ENCODE measurements at regions of chr11 and their contacts with region 1.

Region 1: GRCh38 chr11:64015935-64016845 is 19.5 kb upstream of the FLRT1 start:
- DNase-seq: no peak
- H3K4me3 ChIP-seq: no peak overlapping the region
- H3K27ac ChIP-seq: no peak overlapping the region
- H3K4me1 ChIP-seq: peaks cover 7% of the 10 kb centered on the region
- H3K27me3 ChIP-seq: no peaks in the 10 kb centered on the region
- CTCF ChIP-seq: no peak
- POLR2A ChIP-seq: no peak

Region 2: DNA sequence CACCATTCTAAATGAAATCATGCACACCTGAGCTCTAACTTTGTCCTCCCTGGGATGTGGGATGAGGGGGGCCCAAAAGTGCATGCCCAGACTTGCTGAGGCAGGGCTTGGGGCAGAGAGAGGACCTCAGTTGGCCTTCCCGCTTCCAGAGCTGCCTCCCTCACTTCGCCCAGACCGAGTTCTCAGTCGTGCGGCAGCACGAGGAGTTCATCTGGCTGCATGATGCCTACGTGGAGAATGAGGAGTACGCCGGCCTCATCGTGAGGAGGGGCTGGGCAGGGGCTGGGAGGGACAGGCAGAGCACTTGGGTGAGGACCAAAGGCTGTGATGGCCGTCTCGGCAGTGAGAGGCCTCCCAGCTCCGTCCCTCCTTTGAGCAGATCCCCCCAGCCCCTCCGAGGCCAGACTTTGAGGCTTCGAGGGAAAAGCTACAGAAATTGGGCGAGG is 1833.6 kb after region 1 on chr11:
- intact Hi-C with region 1: loop called (anchors 10 kb)
- DNase-seq: no peak
- H3K4me3 ChIP-seq: no peak overlapping the region
- H3K27ac ChIP-seq: no peak overlapping the region
- H3K4me1 ChIP-seq: no peaks in the 10 kb centered on the region
- H3K27me3 ChIP-seq: no peaks in the 10 kb centered on the region
- CTCF ChIP-seq: no peak
- POLR2A ChIP-seq: no peak